Activated CD4-positive, alpha-beta T cell treated with anti-CD3 and anti-CD28 coated beads, Interleukin-2, amount 10 ng/mL, durations not matched to agents 7 days and 5 days (primary cell): ENCODE measurements at regions of chr16 and their contacts with region 1.

Region 1: GRCh38 chr16:30571695-30572600 is at the start of gene ZNF688:
- DNase-seq: peak; percentile 98
- H3K4me3 Mint-ChIP-seq: peak within 1 kb of the TSS; percentile 86
- H3K27ac Mint-ChIP-seq: peak within 1 kb of the TSS; percentile 96
- H3K4me1 Mint-ChIP-seq: peaks cover 49% of the 10 kb centered on the region
- H3K27me3 Mint-ChIP-seq: no peaks in the 10 kb centered on the region
- total RNA-seq, gene ZNF688: 13.3 to 13.8 TPM

Region 2: GRCh38 chr16:30557957-30558788 is 13.8 kb before region 1 on chr16 and contains the start of gene ZNF764:
- CTCF ChIA-PET with region 1: interaction called, 12 read pairs
- POLR2A ChIA-PET with region 1: no interaction called
- DNase-seq: peak; percentile 98
- H3K4me3 Mint-ChIP-seq: peak within 1 kb of the TSS; percentile 87
- H3K27ac Mint-ChIP-seq: peak within 1 kb of the TSS; percentile 90
- H3K4me1 Mint-ChIP-seq: peaks cover 44% of the 10 kb centered on the region
- H3K27me3 Mint-ChIP-seq: no peaks in the 10 kb centered on the region
- total RNA-seq, gene ZNF764: 17.5 to 18.2 TPM

Region 3: DNA sequence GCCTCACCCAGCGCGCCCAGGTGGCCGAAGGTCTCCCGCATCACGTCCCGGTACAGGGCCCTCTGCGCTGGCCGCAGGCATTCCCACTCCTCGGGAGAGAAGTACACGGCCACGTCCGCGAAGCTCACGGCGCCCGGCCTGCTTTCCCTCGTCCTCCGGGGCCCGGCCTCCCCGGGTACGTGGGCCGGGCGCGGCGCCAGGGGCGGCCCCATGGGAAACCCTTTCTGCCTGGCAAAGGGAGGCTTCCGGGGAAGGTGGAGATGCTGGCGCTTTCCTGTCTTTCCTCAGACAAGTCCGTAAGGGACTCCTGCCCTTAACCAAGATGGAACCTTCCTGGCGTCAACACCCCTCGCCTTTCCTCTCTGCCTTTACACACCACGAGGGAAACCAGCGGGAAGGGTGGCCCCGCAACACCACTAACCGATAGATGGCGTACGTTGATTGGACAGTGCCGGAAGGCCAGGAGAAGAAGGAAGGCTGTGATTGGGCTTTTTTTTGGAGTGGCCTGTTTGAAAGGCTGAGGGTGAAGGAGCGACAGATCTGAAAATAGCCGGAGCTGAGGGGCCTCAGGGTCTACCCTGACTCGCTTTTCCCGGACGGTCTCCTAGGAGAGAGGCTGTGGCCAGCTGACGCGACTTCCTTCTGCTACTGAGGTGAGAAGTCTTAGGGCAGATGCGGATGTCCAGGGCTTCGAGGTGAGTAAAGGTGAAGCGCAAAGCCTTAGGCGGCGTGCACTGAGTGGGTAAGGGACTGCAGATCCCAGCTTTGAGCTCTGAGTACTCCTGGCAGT is 13.6 kb after region 1 on chr16 and contains the start of gene ZNF785:
- CTCF ChIA-PET with region 1: interaction called, 16 read pairs
- POLR2A ChIA-PET with region 1: interaction called, 5 read pairs
- DNase-seq: peak; percentile 98
- H3K4me3 Mint-ChIP-seq: peak within 1 kb of the TSS; percentile 87
- H3K27ac Mint-ChIP-seq: peak within 1 kb of the TSS; percentile 91
- H3K4me1 Mint-ChIP-seq: peaks cover 37% of the 10 kb centered on the region
- H3K27me3 Mint-ChIP-seq: no peaks in the 10 kb centered on the region
- total RNA-seq, gene ZNF785: 17.0 to 18.3 TPM

Region 4: GRCh38 chr16:30602616-30603277 is 30.8 kb after region 1 on chr16:
- CTCF ChIA-PET with region 1: interaction called, 10 read pairs
- POLR2A ChIA-PET with region 1: interaction called, 3 read pairs
- DNase-seq: no peak
- H3K4me3 Mint-ChIP-seq: no peak overlapping the region
- H3K27ac Mint-ChIP-seq: no peak overlapping the region
- H3K4me1 Mint-ChIP-seq: peaks cover 15% of the 10 kb centered on the region
- H3K27me3 Mint-ChIP-seq: no peaks in the 10 kb centered on the region

Region 5: GRCh38 chr16:30637942-30638341 is 66.0 kb after region 1 on chr16:
- CTCF ChIA-PET with region 1: no interaction called
- POLR2A ChIA-PET with region 1: no interaction called
- DNase-seq: peak; percentile 48
- H3K4me3 Mint-ChIP-seq: no peak overlapping the region
- H3K27ac Mint-ChIP-seq: no peak overlapping the region
- H3K4me1 Mint-ChIP-seq: peaks cover 16% of the 10 kb centered on the region
- H3K27me3 Mint-ChIP-seq: peaks cover 2% of the 10 kb centered on the region